Dorsolateral prefrontal cortex (tissue), 120 donors: ENCODE measurements at regions of chr15 and their contacts with region 1.

Region 1: DNA sequence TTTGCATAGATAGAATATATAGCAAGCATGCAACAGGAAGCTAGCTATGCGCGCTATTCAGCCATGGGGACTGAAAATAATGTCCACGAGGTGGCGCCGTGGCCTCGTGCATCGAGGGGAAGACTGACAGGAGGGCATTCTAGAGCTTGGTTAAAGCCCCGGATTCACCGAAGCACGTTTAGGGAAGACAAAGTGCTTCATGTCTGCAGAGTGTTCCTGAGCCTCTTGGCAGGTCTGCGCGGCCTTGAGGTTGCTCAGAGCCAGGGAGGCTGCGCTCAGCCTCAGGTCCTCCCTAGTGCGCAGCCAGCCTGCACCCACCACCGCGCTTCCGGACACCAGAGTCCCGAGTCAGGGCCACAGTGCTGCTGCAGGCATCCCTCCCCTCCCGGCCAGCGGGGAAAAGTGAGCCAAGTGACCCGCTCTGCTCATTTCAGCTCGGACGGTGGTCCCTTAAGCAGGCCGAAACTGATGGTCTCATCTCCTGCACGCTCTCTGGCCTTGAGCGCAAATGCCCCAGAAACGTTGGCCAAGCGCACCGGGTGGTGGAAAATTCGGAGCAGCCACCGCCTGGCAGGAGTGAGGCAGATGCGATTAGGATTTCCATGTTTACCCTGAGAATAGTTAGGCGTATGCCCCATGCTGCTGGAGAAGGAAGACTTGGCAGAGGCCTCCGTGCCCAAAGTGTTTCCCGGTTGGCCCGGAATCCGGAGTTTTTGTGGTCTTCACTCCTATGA is 24.8 kb downstream of the GABRA5 start:
- DNase-seq: peak in 9 of 10 donors; percentile 67 to 89 (median 82)
- H3K4me3 ChIP-seq: peak overlapping the region; percentile 16 to 71 (median 50)
- H3K27ac ChIP-seq: peak overlapping the region in 6 of 59 donors; percentile 21 to 64 (median 45)
- H3K27me3 ChIP-seq: peaks cover 0 to 7% (median 0%) of the 10 kb centered on the region in 45 donors
- CTCF ChIP-seq: peak; percentile 68 to 95 (median 86)

Region 2: GRCh38 chr15:27017168-27017809 is 125.7 kb after region 1 on chr15:
- intact Hi-C with region 1: loop called (anchors 2 to 5 kb)
- DNase-seq: peak in 4 of 10 donors; percentile 11 to 80 (median 44)
- H3K4me3 ChIP-seq: no peak overlapping the region
- H3K27ac ChIP-seq: no peak overlapping the region
- H3K27me3 ChIP-seq: no peaks in the 10 kb centered on the region
- CTCF ChIP-seq: peak in 55 of 56 donors; percentile 22 to 93 (median 74)